ENCODE measurements at regions of chr21 and their contacts with region 1.

Region 1: DNA sequence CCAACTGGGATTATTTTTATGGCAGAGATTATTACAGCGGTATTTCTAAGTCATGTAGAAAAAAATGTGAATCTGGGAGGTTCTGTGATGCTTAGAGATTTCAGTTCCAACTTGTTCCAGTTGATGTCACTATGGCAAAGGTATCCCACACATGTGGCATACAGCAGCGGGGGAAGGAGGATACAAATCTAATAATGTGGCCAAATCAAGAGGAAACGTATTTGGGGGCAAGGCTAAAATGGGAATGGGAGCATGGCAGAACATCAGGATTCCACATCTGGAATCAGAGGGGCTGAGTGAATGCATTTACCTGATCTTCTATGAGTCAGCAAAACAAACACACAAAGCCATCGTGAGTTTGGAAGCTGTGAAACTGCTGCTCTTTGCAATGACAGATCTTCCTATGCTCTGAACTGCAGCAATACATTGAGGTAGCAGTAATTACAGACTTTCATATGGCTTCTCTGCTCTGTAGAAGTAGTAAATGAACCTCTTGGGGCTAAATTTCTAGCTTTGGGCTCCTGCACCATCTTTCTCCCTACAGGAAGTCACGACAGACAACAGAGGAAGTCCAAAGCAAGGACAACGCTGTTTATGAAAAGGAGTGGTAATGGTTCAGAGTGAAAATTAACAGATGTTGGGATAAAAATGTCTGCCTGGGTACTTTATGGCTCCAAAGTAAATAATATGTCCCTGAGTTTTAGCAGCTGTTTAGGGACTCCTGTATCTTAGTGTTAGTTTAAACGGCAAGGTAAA is 55.5 kb downstream of the GABPA start:
- DNase-seq: peak; percentile 27
- H3K4me3 ChIP-seq: peak overlapping the region; percentile 0 to 14 (median 5)
- H3K27ac ChIP-seq: no peak overlapping the region
- H3K4me1 ChIP-seq: peaks cover 8% of the 10 kb centered on the region
- H3K27me3 ChIP-seq: no peaks in the 10 kb centered on the region
- CTCF ChIP-seq: peak; percentile 53 to 64

Region 2: DNA sequence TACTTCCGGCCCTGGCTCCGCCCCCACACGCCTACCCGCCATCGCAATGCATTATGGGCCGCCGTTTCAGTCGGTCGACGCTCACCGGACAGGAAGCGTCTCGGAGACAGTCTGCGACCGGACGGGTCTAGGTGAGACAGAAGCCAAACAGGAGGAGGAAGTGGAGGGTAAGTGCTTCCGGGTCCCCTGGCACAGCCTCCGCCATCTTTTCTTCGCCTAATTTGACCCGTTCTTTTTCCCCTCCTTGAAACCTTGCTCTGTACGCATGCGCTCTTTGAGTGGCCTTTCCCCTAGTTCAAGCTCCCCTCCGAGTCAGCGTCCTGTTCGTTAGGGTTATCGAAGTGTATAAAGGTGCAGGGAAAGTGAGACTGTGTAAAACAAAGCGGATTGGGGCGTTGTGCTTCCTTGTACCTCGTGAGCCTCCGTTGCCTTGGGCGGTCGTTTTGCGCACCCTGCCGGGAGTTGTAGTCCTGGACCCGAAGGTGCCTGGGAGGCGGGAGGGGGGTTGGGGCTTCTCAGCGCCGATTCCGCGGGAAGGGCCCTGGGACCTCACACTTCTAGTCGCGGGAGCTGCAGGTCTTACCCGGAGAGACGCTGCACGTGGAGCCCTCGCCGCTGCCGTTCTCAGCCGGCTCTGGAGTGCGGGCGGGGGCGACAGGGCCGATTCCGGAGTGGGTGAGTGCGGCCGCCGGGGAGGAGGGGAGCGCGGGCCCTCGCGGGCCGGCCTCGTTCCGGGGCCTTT is 55.2 kb before region 1 on chr21 and contains the starts of genes ATP5PF and GABPA:
- CTCF ChIA-PET with region 1: no interaction called
- dilution Hi-C with region 1: no loop called
- in situ Hi-C with region 1: no loop called
- intact Hi-C with region 1: loop called (anchors 5 kb)
- DNase-seq: peak; percentile 99
- H3K4me3 ChIP-seq: peak within 1 kb of the TSS; percentile 82 to 94 (median 91)
- H3K27ac ChIP-seq: peak within 1 kb of the TSS; percentile 89
- H3K4me1 ChIP-seq: peaks cover 13% of the 10 kb centered on the region
- H3K27me3 ChIP-seq: no peaks in the 10 kb centered on the region
- CTCF ChIP-seq: peak in 1 of 2 donors; percentile 28
- total RNA-seq, gene ATP5PF: 27.2 to 122 TPM
- total RNA-seq, gene GABPA: 13.3 to 17.3 TPM

Region 3: DNA sequence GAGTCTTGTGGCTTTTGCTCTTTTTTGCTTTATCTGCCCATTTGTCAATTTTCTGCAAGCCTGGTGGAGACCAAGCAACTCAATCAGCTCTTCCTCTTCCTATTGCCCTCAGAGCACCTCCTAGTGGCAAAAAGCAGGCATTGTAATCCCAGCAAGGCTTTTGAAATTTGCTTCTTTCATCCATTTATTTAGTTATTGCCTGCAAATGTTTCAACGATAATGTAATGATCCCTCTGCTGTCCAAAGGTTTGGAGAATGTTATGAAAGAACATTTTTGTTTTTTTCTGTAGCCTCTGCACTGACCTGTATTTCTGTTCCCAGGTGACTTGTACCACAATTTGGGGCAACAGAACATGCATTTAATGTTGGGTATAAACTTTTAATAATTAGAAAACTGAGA is 72.3 kb after region 1 on chr21:
- CTCF ChIA-PET with region 1: interaction called, 3 read pairs
- dilution Hi-C with region 1: no loop called
- in situ Hi-C with region 1: no loop called
- intact Hi-C with region 1: loop called (anchors 1 kb)
- DNase-seq: peak; percentile 19
- H3K4me3 ChIP-seq: no peak overlapping the region
- H3K27ac ChIP-seq: no peak overlapping the region
- H3K4me1 ChIP-seq: no peaks in the 10 kb centered on the region
- H3K27me3 ChIP-seq: no peaks in the 10 kb centered on the region
- CTCF ChIP-seq: peak; percentile 94 to 98

Region 4: DNA sequence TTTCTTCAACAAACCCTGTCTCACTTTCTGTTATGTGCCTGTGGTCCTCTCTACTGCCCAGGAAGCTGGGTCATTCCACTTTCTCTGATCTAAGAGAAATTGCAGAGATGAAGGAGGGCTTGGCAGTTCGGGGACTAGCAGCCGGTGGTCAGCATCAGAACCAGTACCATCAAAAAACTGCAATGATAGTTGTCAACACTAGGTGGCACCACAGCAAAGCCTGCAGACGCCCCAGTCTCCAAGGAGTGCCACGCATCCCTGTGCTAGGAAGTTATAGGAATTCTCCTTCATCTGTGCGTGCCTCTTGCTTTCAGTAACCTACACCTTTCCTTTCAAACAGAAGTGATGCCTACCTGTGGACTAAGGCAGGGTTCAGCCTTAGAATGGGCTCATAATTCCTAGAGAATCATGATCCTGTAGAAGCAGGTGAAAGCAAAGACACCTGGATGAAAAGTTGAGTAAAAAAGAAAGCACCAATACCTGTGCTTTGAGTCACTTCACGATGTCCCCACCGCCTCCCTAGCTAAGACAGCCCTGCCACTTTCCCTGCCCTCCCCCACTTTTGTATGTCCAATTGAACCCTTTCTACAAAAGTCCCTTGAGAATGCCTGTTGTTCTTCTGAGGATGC is 925.7 kb after region 1 on chr21:
- CTCF ChIA-PET with region 1: no interaction called
- dilution Hi-C with region 1: no loop called
- in situ Hi-C with region 1: no loop called
- intact Hi-C with region 1: loop called (anchors 1 kb)
- DNase-seq: peak; percentile 42
- H3K4me3 ChIP-seq: peak overlapping the region in 1 of 3 experiments; percentile 23
- H3K27ac ChIP-seq: no peak overlapping the region
- H3K4me1 ChIP-seq: peaks cover 4% of the 10 kb centered on the region
- H3K27me3 ChIP-seq: no peaks in the 10 kb centered on the region
- CTCF ChIP-seq: peak; percentile 85 to 86

Measured in mammary epithelial cell (primary cell).